Activated T-helper 2 cell treated with anti-CD3 and anti-CD28 coated beads, Interferon-gamma antibody, Interleukin-2, Interleukin-4, amounts not matched to agents 10 μg/mL and 5 μg/mL and 100 μg/mL, durations not matched to agents 14 hours and 24 hours and 36 hours (primary cell): ENCODE measurements at regions of chr20 and their contacts with region 1.

Region 1: GRCh38 chr20:59042796-59043660 is 442 bp upstream of the PRELID3B start:
- DNase-seq: peak; percentile 93
- H3K4me3 Mint-ChIP-seq: peak overlapping the region; percentile 97
- H3K27ac Mint-ChIP-seq: peak overlapping the region; percentile 95
- H3K4me1 Mint-ChIP-seq: peaks cover 53% of the 10 kb centered on the region
- H3K27me3 Mint-ChIP-seq: no peaks in the 10 kb centered on the region

Region 2: DNA sequence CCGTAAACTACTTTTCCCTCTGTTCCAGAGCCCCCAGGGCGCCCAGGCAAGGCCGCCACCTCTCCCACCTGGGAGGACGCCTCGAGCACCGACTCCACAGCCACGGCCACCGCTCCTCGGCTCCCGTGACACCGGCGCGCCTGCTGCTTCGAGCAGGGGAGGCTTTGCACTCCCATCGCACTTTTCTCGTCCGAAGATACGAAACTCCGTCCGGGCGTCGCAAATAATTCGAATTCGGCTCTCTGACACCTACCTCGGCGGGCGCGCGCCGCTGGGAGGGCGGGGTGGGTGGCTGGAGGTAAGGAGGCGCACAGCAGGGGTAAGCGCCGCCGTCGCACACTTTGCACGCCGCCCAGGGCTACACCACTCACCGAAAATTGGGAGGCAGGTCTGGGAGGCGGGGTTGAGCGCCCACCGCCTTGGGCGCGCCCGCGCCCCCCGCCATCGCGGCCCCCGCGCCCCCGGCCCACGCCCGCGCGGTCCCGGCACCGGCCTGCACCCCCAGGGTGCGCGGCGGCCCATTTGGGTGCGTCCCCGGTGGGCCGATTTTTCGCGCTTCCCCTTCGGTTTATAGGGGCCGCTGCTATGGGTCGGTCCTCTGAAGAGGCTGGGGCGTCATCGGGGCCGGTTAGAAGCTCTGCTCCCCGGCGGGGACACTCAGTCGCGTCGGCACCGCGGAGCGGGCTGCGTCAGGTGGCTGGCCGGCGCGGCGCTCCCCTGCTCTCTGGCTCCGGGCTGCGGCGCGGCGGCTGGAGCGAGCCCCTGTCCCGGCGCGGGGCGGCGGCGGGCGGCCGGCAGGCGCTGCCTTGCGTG is 154.3 kb before region 1 on chr20:
- intact Hi-C with region 1: no loop called
- DNase-seq: peak; percentile 80
- H3K4me3 Mint-ChIP-seq: peak overlapping the region; percentile 80
- H3K27ac Mint-ChIP-seq: peak overlapping the region; percentile 52
- H3K4me1 Mint-ChIP-seq: peaks cover 14% of the 10 kb centered on the region
- H3K27me3 Mint-ChIP-seq: peaks cover 2% of the 10 kb centered on the region

Region 3: GRCh38 chr20:59006864-59007664 is 36.0 kb before region 1 on chr20 and contains the start of gene CTSZ:
- intact Hi-C with region 1: loop called (anchors 5 kb)
- DNase-seq: peak; percentile 39
- H3K4me3 Mint-ChIP-seq: peak within 1 kb of the TSS; percentile 81
- H3K27ac Mint-ChIP-seq: peak within 1 kb of the TSS; percentile 93
- H3K4me1 Mint-ChIP-seq: peaks cover 43% of the 10 kb centered on the region
- H3K27me3 Mint-ChIP-seq: no peaks in the 10 kb centered on the region
- total RNA-seq, gene CTSZ: 62.0 and 66.1 TPM in 2 replicates

Region 4: DNA sequence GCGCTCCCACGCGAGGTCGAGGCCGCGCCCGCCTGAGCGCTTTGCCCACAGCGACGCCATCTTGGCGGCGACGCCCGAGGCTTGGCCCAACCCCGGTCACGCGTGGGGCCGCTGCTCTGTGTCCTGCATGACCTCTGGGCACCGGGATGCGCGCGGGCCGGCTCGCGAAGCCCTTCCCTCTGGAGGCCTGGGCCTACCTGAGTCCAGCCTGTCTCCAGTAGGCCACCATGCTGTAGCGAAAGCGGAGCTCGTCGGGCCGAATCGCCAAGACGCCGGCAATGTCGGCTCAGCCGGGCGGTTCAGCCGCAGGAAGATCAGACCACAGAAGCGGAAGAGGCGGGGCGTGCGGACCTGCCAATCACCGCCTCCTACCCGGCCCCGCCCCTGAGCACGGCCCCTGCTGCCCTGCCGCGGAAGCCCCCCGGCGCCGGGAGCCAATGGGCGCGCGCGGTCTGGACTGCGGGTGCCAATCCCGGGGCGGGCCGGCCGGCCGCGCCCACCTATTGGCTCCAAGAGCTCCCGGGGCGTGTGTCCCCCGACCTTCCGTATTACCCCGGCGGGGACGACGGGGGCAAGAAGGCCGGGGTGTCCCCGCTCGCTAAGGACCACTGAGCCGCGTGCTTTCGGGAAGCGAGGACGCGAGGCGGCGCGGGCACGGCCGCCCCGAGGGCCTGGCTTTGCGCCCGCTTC is 10.9 kb before region 1 on chr20 and contains the start of gene ATP5F1E:
- intact Hi-C with region 1: loop called (anchors 1 kb)
- DNase-seq: peak; percentile 94
- H3K4me3 Mint-ChIP-seq: peak within 1 kb of the TSS; percentile 93
- H3K27ac Mint-ChIP-seq: peak within 1 kb of the TSS; percentile 89
- H3K4me1 Mint-ChIP-seq: peaks cover 65% of the 10 kb centered on the region
- H3K27me3 Mint-ChIP-seq: no peaks in the 10 kb centered on the region
- total RNA-seq, gene ATP5F1E: 61.2 and 66.9 TPM in 2 replicates

Region 5: GRCh38 chr20:59159493-59160376 is 116.7 kb after region 1 on chr20:
- intact Hi-C with region 1: loop called (anchors 5 kb)
- DNase-seq: no peak
- H3K4me3 Mint-ChIP-seq: peak overlapping the region; percentile 41
- H3K27ac Mint-ChIP-seq: peak overlapping the region; percentile 62
- H3K4me1 Mint-ChIP-seq: peaks cover 71% of the 10 kb centered on the region
- H3K27me3 Mint-ChIP-seq: no peaks in the 10 kb centered on the region